Activated naive CD4-positive, alpha-beta T cell treated with anti-CD3 and anti-CD28 coated beads for 36 hours (primary cell): ENCODE measurements at regions of chr17 and their contacts with region 1.

Region 1: GRCh38 chr17:8894673-8895578 is 27.5 kb upstream of the PIK3R6 start:
- DNase-seq: peak; percentile 69
- H3K4me3 Mint-ChIP-seq: no peak overlapping the region
- H3K27ac Mint-ChIP-seq: no peak overlapping the region
- H3K4me1 Mint-ChIP-seq: peaks cover 64% of the 10 kb centered on the region
- H3K27me3 Mint-ChIP-seq: no peaks in the 10 kb centered on the region

Region 2: DNA sequence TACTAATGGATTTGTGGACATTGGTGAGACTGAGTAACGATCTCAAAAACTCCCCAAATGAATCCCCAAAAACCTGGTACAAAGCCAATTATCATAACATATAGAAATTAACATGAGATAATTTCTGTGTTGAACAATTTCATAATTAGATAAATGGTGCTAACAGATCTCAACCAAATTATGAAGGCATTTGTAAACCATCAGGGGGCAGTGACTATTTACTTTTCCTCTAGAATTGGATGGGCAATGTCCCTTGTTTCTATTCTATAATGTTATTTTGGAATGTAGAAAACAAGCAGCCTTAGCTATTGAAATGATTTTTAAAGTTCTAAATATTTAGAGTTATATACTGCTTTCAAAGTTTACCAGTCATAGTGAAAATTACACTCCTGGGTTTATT is 322.2 kb before region 1 on chr17:
- CTCF ChIA-PET with region 1: no interaction called
- intact Hi-C with region 1: loop called (anchors 5 kb)
- DNase-seq: no peak
- H3K4me3 Mint-ChIP-seq: no peak overlapping the region
- H3K27ac Mint-ChIP-seq: no peak overlapping the region
- H3K4me1 Mint-ChIP-seq: no peaks in the 10 kb centered on the region
- H3K27me3 Mint-ChIP-seq: no peaks in the 10 kb centered on the region

Region 3: DNA sequence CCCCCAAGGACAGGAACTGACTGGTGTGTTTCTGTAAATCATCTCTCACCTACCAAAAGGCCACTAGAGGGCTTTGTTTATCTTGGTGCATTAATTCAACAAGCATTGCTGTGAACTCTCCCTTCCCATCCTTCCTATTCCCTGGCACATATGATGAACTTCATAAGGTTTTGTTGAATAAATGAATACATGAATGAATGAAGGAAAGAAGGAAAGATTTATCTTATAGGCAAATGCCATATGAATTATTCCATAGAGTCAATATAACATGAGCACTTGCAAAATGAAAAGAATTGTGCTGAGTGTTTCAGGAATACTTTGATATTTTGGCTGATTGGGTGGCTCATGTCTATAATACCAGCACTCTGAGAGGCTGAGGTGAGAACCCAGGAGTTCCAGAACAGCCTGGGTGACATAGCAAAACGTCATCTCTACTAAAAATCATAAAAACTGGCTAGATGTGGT is 140.9 kb before region 1 on chr17:
- CTCF ChIA-PET with region 1: no interaction called
- intact Hi-C with region 1: loop called (anchors 2 kb)
- DNase-seq: no peak
- H3K4me3 Mint-ChIP-seq: no peak overlapping the region
- H3K27ac Mint-ChIP-seq: no peak overlapping the region
- H3K4me1 Mint-ChIP-seq: no peaks in the 10 kb centered on the region
- H3K27me3 Mint-ChIP-seq: peaks cover 4% of the 10 kb centered on the region

Region 4: DNA sequence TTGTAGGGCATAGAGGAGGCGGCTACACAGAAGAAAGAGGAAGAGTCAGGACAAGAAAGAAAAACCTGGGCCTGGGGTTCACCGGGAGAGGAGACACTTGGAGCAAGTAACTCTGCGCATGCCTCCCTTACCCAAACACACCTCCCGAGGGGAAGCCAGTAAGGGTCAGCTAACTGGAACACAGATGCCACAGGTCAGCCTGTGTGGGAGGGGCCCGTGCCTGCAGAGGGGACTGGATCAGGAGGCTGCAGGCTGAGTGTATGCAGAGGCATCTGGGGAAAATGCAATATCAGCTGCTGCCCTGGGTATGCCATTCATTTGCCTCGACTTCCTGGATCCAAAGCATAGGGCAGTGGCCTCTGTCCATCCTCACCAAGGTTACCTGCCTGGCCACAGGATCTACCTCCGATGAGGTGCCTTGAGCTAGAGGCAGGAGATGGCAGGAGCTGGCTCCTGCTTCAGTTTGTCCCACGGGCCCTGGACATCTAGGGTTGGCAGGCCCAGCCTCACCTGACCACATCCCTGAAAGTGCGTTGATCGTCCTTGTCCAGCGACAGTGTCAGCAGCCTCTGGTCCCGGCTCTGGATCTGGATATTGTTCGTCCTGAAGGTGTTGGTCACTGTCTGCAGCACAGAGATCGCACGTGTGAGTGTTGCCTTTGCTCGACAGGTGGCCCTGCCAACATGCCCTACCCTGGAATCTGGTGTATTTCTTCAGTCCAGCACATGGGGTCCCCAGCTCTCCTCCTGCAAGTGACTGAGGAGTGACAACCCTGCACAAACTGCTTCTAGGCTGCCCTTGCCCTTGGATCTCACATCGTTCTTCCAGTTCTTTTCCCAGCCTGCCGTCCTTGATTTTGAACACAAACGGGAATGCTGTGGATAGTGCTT is 91.2 kb before region 1 on chr17:
- CTCF ChIA-PET with region 1: interaction called, 4 read pairs
- intact Hi-C with region 1: loop called (anchors 5 kb)
- DNase-seq: peak; percentile 18
- H3K4me3 Mint-ChIP-seq: no peak overlapping the region
- H3K27ac Mint-ChIP-seq: no peak overlapping the region
- H3K4me1 Mint-ChIP-seq: no peaks in the 10 kb centered on the region
- H3K27me3 Mint-ChIP-seq: no peaks in the 10 kb centered on the region

Region 5: GRCh38 chr17:8905331-8905730 is 10.4 kb after region 1 on chr17:
- CTCF ChIA-PET with region 1: no interaction called
- intact Hi-C with region 1: no loop called
- DNase-seq: no peak
- H3K4me3 Mint-ChIP-seq: no peak overlapping the region
- H3K27ac Mint-ChIP-seq: no peak overlapping the region
- H3K4me1 Mint-ChIP-seq: peaks cover 22% of the 10 kb centered on the region
- H3K27me3 Mint-ChIP-seq: no peaks in the 10 kb centered on the region

Region 6: DNA sequence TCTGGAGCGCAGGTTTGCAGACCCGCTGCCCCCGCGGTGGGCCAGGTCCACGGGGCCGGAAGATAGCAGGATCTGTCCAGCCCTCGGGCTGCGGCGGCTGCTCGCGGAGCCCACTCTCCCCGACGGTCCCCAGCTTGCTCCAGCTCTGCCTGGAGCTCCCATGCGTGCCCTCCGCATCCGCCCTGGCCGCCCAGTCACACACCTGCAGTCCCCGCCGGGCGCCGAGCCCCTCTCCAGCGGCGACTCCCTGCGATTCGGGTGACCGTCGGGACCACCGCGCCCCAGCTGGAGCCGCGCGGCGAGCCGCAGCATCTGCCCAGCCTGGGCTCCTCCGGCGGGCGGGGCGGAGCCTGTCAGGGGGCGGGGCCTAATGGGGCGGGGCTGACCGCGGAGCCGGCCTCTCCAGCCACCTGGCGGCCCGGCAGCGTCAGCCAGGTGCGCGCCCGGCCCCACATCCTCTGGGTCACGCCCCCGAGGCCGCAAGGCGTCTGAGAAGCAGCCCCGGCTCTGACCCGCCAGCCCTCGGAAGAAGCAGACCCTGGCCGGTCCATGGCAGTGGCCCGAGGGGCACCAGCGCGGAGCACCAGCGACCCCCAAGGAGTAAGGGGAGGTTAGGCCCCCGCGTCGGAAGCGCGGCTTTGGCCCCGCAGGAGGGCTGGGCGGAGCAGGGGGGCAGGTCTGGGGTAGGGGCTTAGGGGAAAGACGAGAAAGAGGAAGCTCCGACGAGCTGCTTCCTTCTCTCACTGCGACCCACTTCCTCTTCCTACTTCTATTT is 70.7 kb after region 1 on chr17 and contains the start of gene PIK3R5:
- CTCF ChIA-PET with region 1: interaction called, 11 read pairs
- intact Hi-C with region 1: loop called (anchors 1 kb)
- DNase-seq: peak; percentile 82
- H3K4me3 Mint-ChIP-seq: peak within 1 kb of the TSS; percentile 95
- H3K27ac Mint-ChIP-seq: peak within 1 kb of the TSS; percentile 80
- H3K4me1 Mint-ChIP-seq: peaks cover 46% of the 10 kb centered on the region
- H3K27me3 Mint-ChIP-seq: no peaks in the 10 kb centered on the region
- total RNA-seq, gene PIK3R5: 15.9 to 18.1 TPM